Right ventricle myocardium inferior (tissue), 1 donor: ENCODE measurements at regions of chr9 and their contacts with region 1.

Region 1: GRCh38 chr9:75088260-75088905 is at the start of gene OSTF1:
- DNase-seq: peak; percentile 99
- ATAC-seq: peak; percentile 98
- total RNA-seq, gene OSTF1: 25.0 TPM

Region 2: DNA sequence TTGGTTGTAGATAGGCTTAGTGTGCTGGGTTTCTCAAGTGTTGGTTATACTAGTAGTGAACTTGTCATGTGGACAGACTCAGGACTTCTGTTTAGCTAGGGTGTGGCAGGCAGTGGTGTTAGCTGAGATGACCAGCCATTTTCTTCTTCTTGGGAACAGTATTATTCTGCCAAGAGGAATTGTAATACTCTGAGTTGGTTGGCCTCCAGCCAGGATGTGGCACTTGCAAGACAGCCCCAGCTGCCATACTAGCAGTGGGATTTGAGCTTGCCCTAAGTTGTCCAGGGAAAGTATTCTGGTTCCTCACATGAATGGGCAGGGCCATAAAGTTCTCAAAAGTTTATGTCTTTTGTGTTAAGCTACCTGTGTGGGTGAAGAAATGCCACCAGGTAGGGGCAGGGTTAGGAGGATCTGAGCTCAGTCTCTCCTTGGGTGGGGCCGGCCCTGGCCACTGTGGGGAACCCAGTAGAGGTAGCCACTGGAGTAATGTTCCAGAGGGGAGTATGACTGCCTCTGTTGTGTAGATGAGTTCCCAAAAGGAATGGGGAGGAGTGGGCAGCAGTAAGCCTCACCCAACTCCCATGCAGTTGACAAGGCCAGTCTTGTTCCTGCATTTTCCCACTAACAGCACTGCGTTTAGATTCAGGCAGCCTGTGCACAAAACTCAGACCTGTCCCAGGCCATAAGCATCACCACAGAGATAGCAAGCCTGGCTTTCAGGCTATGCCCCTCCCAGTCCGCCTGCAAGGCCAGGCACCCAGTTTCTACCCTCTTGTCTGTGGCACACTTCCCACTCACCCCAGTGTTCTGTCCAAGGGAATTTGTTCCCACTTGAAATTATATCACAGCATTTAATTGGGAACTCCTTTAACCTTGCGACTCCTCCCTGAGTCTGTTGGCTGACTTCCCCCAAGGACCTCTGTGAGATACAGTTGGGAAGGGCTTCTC is 1686.0 kb before region 1 on chr9:
- intact Hi-C with region 1: loop called (anchors 10 kb)
- DNase-seq: peak; percentile 56
- ATAC-seq: peak; percentile 44

Region 3: DNA sequence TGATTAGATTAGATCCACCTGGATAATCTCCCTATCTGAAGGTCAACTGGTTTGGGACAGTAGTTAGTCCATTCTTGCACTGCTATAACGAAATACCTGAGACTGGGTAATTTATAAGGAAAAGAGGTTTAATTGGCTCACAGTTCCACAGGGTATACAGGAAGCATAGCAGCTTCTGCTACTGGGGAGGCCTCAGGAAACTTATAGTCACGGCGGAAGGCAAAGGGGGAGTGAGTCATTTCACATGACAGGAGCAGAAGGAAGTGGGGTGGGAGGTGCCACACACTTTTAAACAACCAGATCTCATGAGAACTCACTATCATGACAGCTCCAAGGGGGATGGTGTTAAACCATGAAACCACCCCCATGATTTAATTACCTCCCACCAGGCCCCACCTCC is 145.6 kb before region 1 on chr9:
- intact Hi-C with region 1: no loop called
- DNase-seq: no peak
- ATAC-seq: no peak

Region 4: GRCh38 chr9:75027187-75028107 is 60.9 kb before region 1 on chr9:
- intact Hi-C with region 1: loop called (anchors 5 kb)
- DNase-seq: peak; percentile 85
- ATAC-seq: peak; percentile 66

Region 5: GRCh38 chr9:75148561-75148960 is 60.2 kb after region 1 on chr9:
- intact Hi-C with region 1: no loop called
- DNase-seq: no peak
- ATAC-seq: peak; percentile 39